HEK293 (cell line): ENCODE measurements at regions of chr12 and their contacts with region 1.

Region 1: GRCh38 chr12:46675736-46676135 is 150.1 kb downstream of the SLC38A4 start:
- H3K4me3 ChIP-seq: no peak overlapping the region
- H3K27ac ChIP-seq: no peak overlapping the region
- H3K4me1 ChIP-seq: no peaks in the 10 kb centered on the region
- CTCF ChIP-seq: no peak

Region 2: DNA sequence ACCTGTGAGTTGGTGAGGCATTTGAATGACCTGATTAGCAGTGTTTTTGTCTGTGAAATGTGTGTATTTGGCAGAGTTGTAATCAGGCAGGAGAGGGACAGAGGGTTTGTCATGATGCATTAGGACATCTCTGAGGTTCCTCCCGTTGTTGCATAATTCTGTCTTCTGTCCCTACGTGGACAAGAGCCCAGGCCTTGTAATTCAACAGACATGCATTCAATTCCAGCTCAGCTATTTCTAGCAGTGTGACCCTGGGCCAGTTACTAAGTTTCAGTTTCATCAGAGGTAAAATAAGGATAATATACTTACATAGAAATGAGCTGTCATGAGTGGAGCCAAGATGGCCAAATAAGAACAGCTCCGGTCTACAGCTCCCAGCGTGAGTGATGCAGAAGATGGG is 58.6 kb before region 1 on chr12:
- CTCF ChIA-PET with region 1: no interaction called
- POLR2A ChIA-PET with region 1: no interaction called
- H3K4me3 ChIP-seq: no peak overlapping the region
- H3K27ac ChIP-seq: no peak overlapping the region
- H3K4me1 ChIP-seq: no peaks in the 10 kb centered on the region
- CTCF ChIP-seq: no peak

Region 3: GRCh38 chr12:46933947-46934346 is 258.2 kb after region 1 on chr12:
- CTCF ChIA-PET with region 1: interaction called, 12 read pairs
- POLR2A ChIA-PET with region 1: no interaction called
- H3K4me3 ChIP-seq: no peak overlapping the region
- H3K27ac ChIP-seq: no peak overlapping the region
- H3K4me1 ChIP-seq: no peaks in the 10 kb centered on the region
- CTCF ChIP-seq: no peak